ENCODE measurements at regions of chr1 and their contacts with region 1.

Region 1: DNA sequence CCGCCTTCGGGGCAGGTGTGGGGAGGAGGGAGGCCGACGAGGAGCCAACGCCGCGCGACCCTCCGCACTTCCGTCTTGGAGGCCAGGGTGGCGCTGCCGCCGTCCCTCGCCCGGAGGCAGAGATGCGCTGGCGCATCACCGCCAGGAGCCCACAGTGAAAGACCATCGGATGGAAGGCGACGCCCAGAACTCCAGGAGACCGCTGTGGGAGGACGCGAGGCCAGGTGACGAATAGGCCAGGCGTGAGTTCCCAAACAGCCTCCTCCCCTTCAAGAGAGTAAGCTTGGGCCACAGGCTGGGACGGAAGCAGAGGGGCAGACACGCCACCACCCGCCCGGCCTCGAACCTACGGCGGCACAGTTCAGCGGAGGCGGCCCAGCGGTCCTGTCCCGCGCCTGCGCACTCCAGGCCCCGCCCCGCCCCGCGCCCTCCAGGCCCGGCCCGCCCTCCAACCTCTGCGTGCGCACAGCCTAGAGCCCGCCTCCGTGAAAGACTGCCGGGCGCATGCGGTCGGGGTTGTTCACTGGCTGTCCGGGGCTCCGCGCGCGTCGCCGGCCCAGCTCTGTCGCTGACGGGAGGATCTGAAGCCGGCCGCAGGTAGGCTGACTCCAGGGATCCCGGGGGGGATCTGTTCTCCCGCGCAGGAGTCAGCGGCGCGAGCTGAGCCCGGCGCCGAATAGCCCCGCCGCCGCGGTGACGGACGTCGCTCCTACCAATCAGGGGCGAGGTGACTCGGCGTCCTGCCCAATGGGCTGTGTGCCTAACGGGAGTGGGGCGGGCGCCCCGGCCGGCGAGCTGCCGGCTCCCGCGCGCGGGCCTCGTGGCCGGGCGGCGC is at the start of gene CTPS1:
- DNase-seq: peak; percentile 67 to 96
- H3K4me3 ChIP-seq: peak within 1 kb of the TSS; percentile 78 to 87 (median 80)
- H3K27ac ChIP-seq: peak within 1 kb of the TSS; percentile 94
- H3K4me1 ChIP-seq: peaks cover 4 to 11% (median 6%) of the 10 kb centered on the region in 4 experiments; a peak in 5 of 7 replicates
- H3K27me3 ChIP-seq: no peaks in the 10 kb centered on the region
- CTCF ChIP-seq: peak; percentile 58 to 68 (median 62)
- EP300 ChIP-seq: no peak; a peak in 1 of 3 replicates
- POLR2A ChIP-seq: peak; percentile 71 to 86
- RAD21 ChIP-seq: no peak
- total RNA-seq, gene CTPS1: 98.4 and 103 TPM in 2 replicates

Region 2: GRCh38 chr1:40862008-40862863 is 117.2 kb before region 1 on chr1 and contains the start of gene CITED4:
- CTCF ChIA-PET with region 1: interaction called, 5 read pairs
- POLR2A ChIA-PET with region 1: interaction called, 15 read pairs
- DNase-seq: peak; percentile 92 to 97
- H3K4me3 ChIP-seq: peak within 1 kb of the TSS; percentile 39 to 64 (median 48)
- H3K27ac ChIP-seq: peak within 1 kb of the TSS; percentile 19; the same call in 1 of the 2 replicates
- H3K4me1 ChIP-seq: peaks cover 4 to 8% (median 6%) of the 10 kb centered on the region in 4 experiments
- H3K27me3 ChIP-seq: peaks cover 0 to 20% (median 16%) of the 10 kb centered on the region in 4 experiments; a peak in 5 of 7 replicates
- CTCF ChIP-seq: peak; percentile 46 to 64 (median 58)
- EP300 ChIP-seq: no peak
- POLR2A ChIP-seq: peak; percentile 97 to 98
- RAD21 ChIP-seq: peak; percentile 70 to 78
- total RNA-seq, gene CITED4: 16.0 and 16.3 TPM in 2 replicates

Region 3: DNA sequence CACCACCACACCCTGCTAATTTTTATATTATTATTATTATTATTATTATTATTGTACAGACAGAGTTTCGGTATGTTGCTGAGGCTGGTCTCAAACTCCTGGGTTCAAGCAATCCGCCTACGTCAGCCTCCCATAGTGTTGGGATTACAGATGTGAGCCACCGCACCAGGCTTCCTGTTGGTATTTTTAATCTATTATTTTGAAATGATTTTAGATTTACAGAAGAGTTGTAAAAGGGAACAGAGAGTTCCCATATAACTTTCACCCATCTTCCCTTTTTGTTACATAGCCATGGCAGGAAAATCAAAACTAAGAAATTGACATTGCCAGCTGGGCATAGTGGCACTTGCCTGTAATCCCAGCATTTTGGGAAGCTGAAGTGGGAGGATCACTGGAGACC is 74.4 kb before region 1 on chr1:
- CTCF ChIA-PET with region 1: no interaction called
- POLR2A ChIA-PET with region 1: no interaction called
- DNase-seq: no peak
- H3K4me3 ChIP-seq: no peak overlapping the region
- H3K27ac ChIP-seq: no peak overlapping the region
- H3K4me1 ChIP-seq: no peaks in the 10 kb centered on the region
- H3K27me3 ChIP-seq: no peaks in the 10 kb centered on the region
- CTCF ChIP-seq: no peak
- EP300 ChIP-seq: no peak
- POLR2A ChIP-seq: no peak
- RAD21 ChIP-seq: no peak

Region 4: DNA sequence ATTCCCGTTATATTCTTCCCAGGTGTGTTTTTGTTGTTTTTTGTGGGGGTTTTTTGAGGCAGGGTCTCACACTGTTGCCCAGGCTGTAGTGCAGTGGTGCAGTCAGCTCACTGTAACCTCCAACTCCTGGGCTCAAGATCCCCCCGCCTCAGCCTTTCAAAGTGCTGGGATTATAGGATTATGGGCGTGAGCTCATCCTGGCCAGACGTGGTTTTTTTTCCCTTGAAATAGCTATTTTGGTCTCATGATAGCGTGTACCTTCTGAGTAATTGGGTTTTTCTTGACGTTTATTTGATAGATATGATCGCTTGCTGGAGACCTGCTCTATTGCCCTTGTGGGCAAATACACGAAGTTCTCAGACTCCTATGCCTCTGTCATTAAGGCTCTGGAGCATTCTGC is 17.6 kb after region 1 on chr1:
- CTCF ChIA-PET with region 1: interaction called, 4 read pairs
- POLR2A ChIA-PET with region 1: interaction called, 49 read pairs
- DNase-seq: no peak
- H3K4me3 ChIP-seq: no peak overlapping the region
- H3K27ac ChIP-seq: no peak overlapping the region
- H3K4me1 ChIP-seq: no peaks in the 10 kb centered on the region
- H3K27me3 ChIP-seq: no peaks in the 10 kb centered on the region
- CTCF ChIP-seq: no peak
- EP300 ChIP-seq: no peak
- POLR2A ChIP-seq: no peak
- RAD21 ChIP-seq: no peak

Region 5: GRCh38 chr1:41003640-41004220 is 24.3 kb after region 1 on chr1:
- CTCF ChIA-PET with region 1: interaction called, 3 read pairs
- POLR2A ChIA-PET with region 1: interaction called, 10 read pairs
- DNase-seq: no peak
- H3K4me3 ChIP-seq: no peak overlapping the region
- H3K27ac ChIP-seq: no peak overlapping the region
- H3K4me1 ChIP-seq: no peaks in the 10 kb centered on the region
- H3K27me3 ChIP-seq: no peaks in the 10 kb centered on the region
- CTCF ChIP-seq: peak; percentile 27 to 35 (median 28)
- EP300 ChIP-seq: no peak
- POLR2A ChIP-seq: no peak
- RAD21 ChIP-seq: peak; percentile 18 to 24; a peak in 2 of 4 replicates

Region 6: GRCh38 chr1:41023279-41023990 is 44.0 kb after region 1 on chr1:
- CTCF ChIA-PET with region 1: interaction called, 4 read pairs
- POLR2A ChIA-PET with region 1: interaction called, 17 read pairs
- DNase-seq: no peak
- H3K4me3 ChIP-seq: no peak overlapping the region
- H3K27ac ChIP-seq: no peak overlapping the region
- H3K4me1 ChIP-seq: peaks cover 0 to 7% (median 4%) of the 10 kb centered on the region in 4 experiments; a peak in 4 of 7 replicates
- H3K27me3 ChIP-seq: peaks cover 0 to 13% (median 6%) of the 10 kb centered on the region in 4 experiments; a peak in 5 of 7 replicates
- CTCF ChIP-seq: peak; percentile 19 to 46 (median 43); a peak in 3 of 4 replicates
- EP300 ChIP-seq: no peak
- POLR2A ChIP-seq: no peak
- RAD21 ChIP-seq: peak; percentile 21 to 40; a peak in 3 of 4 replicates